KBM-7 (cell line): ENCODE measurements at regions of chr12 and their contacts with region 1.

Region 1: GRCh38 chr12:40152783-40153383 is 47.0 kb upstream of the SLC2A13 start:
- DNase-seq: peak; percentile 70

Region 2: GRCh38 chr12:40312982-40313576 is 160.2 kb after region 1 on chr12:
- in situ Hi-C with region 1: loop called (anchors 10 kb)
- DNase-seq: no peak